ENCODE measurements at regions of chr16 and their contacts with region 1.

Region 1: DNA sequence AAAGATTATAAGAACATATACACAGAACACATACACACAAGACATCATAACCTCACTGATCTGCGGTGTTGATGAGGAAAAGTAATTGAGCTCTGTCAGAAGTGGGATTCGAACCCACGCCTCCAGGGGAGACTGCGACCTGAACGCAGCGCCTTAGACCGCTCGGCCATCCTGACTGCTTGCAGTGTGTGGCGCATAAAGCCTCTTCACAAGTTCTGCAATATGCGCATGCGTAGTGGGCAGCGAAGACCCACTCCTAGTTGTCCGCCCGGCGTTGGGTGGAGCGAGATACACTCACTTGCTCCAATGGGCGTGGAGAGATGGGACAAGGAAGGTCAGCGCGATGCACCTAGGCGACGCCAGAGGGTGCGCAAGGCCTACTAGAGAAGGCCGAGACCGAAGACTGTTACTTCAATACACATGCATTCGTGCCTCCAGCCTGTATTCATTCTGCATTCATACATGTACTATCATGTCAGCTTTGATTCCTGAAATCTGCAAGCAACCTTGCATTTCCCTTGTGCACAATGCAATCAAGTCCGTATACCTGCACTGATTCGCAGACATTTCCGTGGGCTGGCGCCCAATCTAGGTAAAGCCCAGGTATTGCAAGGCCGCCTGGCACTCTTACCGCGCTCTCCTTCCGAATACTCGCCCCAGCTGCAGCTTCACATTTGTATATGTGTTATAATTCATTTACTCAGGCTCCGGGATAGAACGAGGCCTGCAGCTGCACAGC is 16.1 kb upstream of the PLLP start:
- DNase-seq: peak; percentile 98 to 99 (median 98)
- ATAC-seq: peak; percentile 85 to 96 (median 88)
- H3K4me3 ChIP-seq: peak overlapping the region; percentile 31 to 37 (median 35)
- H3K27ac ChIP-seq: peak overlapping the region; percentile 67 to 88 (median 70)
- H3K4me1 ChIP-seq: peaks cover 0 to 29% (median 16%) of the 10 kb centered on the region in 4 donors
- H3K27me3 ChIP-seq: no peaks in the 10 kb centered on the region
- CTCF ChIP-seq: peak; percentile 95 to 99 (median 96)
- POLR2A ChIP-seq: no peak

Region 2: GRCh38 chr16:57084257-57084770 is 216.2 kb before region 1 on chr16:
- intact Hi-C with region 1: loop called in 1 of 2 experiments (anchors 10 kb)
- DNase-seq: peak; percentile 60 to 81 (median 77)
- ATAC-seq: peak; percentile 85 to 94 (median 90)
- H3K4me3 ChIP-seq: no peak overlapping the region
- H3K27ac ChIP-seq: no peak overlapping the region
- H3K4me1 ChIP-seq: peaks cover 0 to 9% (median 2%) of the 10 kb centered on the region in 4 donors
- H3K27me3 ChIP-seq: no peaks in the 10 kb centered on the region
- CTCF ChIP-seq: peak; percentile 87 to 98 (median 95)
- POLR2A ChIP-seq: no peak

Region 3: DNA sequence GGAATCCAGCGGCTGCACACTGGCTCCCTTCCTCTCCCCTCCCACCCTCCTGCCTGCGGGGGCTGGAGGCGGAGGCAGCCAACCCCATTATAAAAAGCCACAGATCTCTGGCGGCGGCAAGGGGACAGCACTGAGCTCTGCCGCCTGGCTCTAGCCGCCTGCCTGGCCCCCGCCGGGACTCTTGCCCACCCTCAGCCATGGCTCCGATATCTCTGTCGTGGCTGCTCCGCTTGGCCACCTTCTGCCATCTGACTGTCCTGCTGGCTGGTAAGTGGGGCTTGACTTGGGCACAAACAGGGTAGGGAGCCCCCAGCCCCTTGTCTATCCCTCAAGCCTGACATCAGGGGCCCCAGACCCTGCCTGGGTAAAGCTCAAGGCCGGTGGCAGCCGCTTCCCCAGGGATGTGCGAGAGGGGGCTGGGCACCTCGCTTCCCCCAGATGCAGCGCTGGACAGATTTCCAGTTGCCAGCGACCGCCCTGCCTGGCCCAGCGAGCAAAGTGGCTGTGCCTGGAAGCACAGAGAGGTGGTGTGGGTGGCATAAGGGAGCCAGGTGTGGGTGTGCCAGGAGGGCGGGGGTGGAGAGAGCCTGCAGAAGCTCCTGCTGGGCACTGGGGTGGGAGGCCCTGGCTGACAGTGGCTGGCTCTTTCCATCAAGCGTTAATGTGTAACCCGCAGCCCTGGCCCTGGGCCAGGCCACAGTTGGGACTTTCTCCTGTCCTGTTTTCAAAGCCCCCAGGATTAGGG is 72.0 kb after region 1 on chr16 and contains the start of gene CX3CL1:
- intact Hi-C with region 1: loop called in 1 of 2 experiments (anchors 10 kb)
- DNase-seq: peak; percentile 91 to 98 (median 96)
- ATAC-seq: peak; percentile 89 to 97 (median 92)
- H3K4me3 ChIP-seq: peak within 1 kb of the TSS; percentile 58 to 67 (median 66)
- H3K27ac ChIP-seq: peak within 1 kb of the TSS; percentile 95 to 99 (median 97)
- H3K4me1 ChIP-seq: peaks cover 0 to 26% (median 6%) of the 10 kb centered on the region in 4 donors
- H3K27me3 ChIP-seq: no peaks in the 10 kb centered on the region
- CTCF ChIP-seq: peak in 2 of 4 donors; percentile 14 to 23
- POLR2A ChIP-seq: peak; percentile 86
- total RNA-seq, gene CX3CL1: 3.3 to 20.5 (median 9.8) TPM

Region 4: DNA sequence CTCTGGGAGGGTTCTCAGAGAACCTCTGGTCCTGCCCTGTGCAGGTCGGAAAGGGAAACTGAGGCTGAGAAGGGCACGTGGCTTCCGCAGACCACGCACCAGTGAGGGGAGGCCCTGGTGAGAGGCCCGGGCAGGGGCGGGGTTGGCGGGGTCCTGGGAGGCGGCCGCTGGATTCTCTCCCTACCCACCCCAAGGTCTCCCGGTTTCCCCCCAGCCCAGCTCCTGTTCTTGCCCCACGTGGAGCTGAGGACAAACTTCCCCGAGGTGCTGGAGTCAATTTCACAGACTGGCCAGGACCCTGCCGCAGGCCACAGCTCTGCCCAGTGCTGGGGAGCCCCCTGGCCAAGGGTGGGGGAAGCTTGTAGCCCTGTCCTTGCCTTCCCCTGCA is 115.6 kb after region 1 on chr16:
- intact Hi-C with region 1: loop called (anchors 2 to 5 kb)
- DNase-seq: peak in 1 of 3 donors; percentile 54
- ATAC-seq: no peak
- H3K4me3 ChIP-seq: no peak overlapping the region
- H3K27ac ChIP-seq: no peak overlapping the region
- H3K4me1 ChIP-seq: peaks cover 0 to 21% (median 8%) of the 10 kb centered on the region in 4 donors
- H3K27me3 ChIP-seq: no peaks in the 10 kb centered on the region
- CTCF ChIP-seq: no peak
- POLR2A ChIP-seq: no peak